ENCODE measurements at regions of chr1 and their contacts with region 1.

Region 1: GRCh38 chr1:119112791-119113190 is 27.7 kb downstream of the WARS2 start:
- DNase-seq: no peak
- H3K4me3 ChIP-seq: no peak overlapping the region
- H3K27ac ChIP-seq: peak overlapping the region in 3 of 4 donors; percentile 54 to 64 (median 63)
- H3K4me1 ChIP-seq: peaks cover 0 to 21% (median 14%) of the 10 kb centered on the region in 4 donors
- H3K27me3 ChIP-seq: no peaks in the 10 kb centered on the region
- CTCF ChIP-seq: no peak
- EP300 ChIP-seq: no peak
- POLR2A ChIP-seq: no peak

Region 2: DNA sequence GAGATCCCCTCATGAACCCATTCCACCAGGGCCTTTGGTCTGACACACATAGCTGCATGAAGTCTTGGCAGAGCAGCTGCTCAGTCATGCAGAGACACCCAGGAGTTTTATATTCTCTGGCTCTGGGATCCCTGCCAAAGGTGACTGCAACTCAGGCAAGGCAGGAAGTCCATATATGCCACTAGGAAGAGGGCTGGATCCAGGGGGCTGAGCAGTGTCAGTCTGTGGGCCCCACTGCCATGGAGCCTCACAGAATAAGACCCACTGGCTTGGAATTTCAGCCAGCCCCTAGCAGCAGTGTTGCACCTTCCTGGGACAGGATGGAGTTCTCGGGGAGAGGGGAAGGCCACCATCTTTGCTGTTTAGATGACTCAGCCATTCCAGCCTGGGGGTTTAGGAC is 324.3 kb before region 1 on chr1:
- intact Hi-C with region 1: no loop called
- DNase-seq: no peak
- H3K4me3 ChIP-seq: no peak overlapping the region
- H3K27ac ChIP-seq: no peak overlapping the region
- H3K4me1 ChIP-seq: no peaks in the 10 kb centered on the region
- H3K27me3 ChIP-seq: no peaks in the 10 kb centered on the region
- CTCF ChIP-seq: no peak
- EP300 ChIP-seq: no peak
- POLR2A ChIP-seq: no peak

Region 3: DNA sequence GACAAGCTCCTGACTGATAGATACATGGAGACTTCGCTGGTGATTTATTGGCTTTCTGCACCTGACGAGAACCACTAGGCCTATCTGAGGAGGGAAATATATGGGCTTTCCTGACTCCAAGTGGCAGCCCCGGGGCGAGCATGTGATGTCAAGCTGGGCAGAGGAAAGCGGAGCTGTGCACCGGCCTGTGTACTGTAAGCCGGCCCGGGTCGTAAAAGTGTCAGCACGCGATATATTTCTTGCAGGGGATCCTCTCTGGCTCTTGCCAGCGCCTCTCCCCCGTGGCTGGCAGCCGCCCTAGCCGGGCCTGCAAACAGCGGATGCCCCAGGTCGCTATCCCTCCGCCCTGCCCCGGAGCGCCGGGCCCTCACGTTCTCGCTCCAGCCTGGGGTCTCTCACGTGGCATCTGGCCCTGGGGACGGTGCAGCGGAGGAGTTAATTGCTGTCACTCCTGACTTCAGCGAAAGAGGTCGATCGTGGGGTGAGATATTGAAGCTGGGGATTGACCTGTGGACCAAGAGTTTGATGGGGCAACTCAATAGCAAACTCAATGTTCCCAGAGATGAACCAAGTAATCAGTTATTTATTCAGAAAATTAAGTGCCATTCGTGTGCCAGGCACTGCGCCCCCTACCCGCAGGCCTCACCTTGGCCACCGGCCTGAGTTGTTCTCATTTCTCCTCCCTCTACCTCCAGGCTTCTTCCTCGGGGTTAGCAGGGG is 214.8 kb after region 1 on chr1:
- intact Hi-C with region 1: loop called (anchors 2 kb)
- DNase-seq: peak; percentile 96
- H3K4me3 ChIP-seq: peak overlapping the region; percentile 30 to 51 (median 44)
- H3K27ac ChIP-seq: peak overlapping the region in 3 of 4 donors; percentile 73 to 80 (median 74)
- H3K4me1 ChIP-seq: peaks cover 0 to 58% (median 45%) of the 10 kb centered on the region in 4 donors
- H3K27me3 ChIP-seq: no peaks in the 10 kb centered on the region
- CTCF ChIP-seq: peak in 1 of 4 experiments; percentile 18
- EP300 ChIP-seq: peak; percentile 50 to 89 (median 75)
- POLR2A ChIP-seq: no peak

Measured in sigmoid colon (tissue), 7 donors.